Esophagus muscularis mucosa (tissue), 4 donors: ENCODE measurements at regions of chr9 and their contacts with region 1.

Region 1: GRCh38 chr9:90102292-90102901 is 497.6 kb downstream of the GADD45G start:
- DNase-seq: no peak
- H3K4me3 ChIP-seq: no peak overlapping the region
- H3K27ac ChIP-seq: no peak overlapping the region
- H3K4me1 ChIP-seq: peaks cover 18 to 27% (median 21%) of the 10 kb centered on the region in 4 donors
- H3K27me3 ChIP-seq: no peaks in the 10 kb centered on the region
- CTCF ChIP-seq: peak; percentile 77 to 93 (median 88)
- EP300 ChIP-seq: no peak
- POLR2A ChIP-seq: no peak

Region 2: DNA sequence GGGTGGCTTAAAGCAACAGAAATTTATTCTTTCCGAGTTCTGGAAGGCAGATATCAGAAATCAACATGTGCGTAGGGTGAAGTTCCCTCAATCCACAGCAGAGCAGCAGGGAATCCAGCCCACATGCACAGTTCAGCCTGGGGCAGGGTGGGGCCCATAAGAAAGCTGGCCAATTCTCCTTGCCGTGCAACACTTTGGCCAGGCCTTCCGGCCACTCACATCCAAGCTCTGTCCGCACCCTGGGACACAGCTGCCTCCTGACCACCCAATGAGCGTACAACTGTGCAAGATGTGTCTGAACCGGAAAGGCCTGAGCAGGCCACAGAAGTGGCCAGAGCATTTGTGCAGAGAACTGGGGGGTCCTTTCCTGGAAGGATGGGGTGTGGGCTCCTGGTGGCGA is 222.7 kb before region 1 on chr9:
- intact Hi-C with region 1: loop called (anchors 10 kb)
- DNase-seq: peak; percentile 93
- H3K4me3 ChIP-seq: no peak overlapping the region
- H3K27ac ChIP-seq: peak overlapping the region in 1 of 4 donors; percentile 20
- H3K4me1 ChIP-seq: peaks cover 40 to 52% (median 46%) of the 10 kb centered on the region in 4 donors
- H3K27me3 ChIP-seq: no peaks in the 10 kb centered on the region
- CTCF ChIP-seq: no peak
- EP300 ChIP-seq: no peak
- POLR2A ChIP-seq: no peak

Region 3: DNA sequence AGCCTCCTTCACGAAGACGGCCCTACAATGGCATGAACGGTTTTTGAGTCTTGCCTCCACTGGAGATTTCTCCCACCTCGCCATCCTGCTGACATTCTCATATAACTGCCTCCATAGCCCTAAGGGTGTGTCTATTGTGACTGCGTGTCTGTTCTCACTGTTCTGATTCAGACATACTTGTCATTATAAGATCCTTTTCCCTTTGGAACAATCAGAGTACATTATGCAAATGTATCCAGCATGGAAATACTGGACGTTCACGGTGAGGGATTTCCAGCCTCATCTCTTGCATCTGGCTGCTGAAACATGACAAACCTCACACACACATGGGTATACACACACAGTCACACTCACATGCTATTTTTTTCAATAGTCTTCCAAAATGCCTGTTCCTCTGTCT is 138.1 kb after region 1 on chr9:
- intact Hi-C with region 1: no loop called
- DNase-seq: no peak
- H3K4me3 ChIP-seq: no peak overlapping the region
- H3K27ac ChIP-seq: no peak overlapping the region
- H3K4me1 ChIP-seq: no peaks in the 10 kb centered on the region
- H3K27me3 ChIP-seq: no peaks in the 10 kb centered on the region
- CTCF ChIP-seq: no peak
- EP300 ChIP-seq: no peak
- POLR2A ChIP-seq: no peak